ENCODE measurements at regions of chr11 and their contacts with region 1.

Region 1: DNA sequence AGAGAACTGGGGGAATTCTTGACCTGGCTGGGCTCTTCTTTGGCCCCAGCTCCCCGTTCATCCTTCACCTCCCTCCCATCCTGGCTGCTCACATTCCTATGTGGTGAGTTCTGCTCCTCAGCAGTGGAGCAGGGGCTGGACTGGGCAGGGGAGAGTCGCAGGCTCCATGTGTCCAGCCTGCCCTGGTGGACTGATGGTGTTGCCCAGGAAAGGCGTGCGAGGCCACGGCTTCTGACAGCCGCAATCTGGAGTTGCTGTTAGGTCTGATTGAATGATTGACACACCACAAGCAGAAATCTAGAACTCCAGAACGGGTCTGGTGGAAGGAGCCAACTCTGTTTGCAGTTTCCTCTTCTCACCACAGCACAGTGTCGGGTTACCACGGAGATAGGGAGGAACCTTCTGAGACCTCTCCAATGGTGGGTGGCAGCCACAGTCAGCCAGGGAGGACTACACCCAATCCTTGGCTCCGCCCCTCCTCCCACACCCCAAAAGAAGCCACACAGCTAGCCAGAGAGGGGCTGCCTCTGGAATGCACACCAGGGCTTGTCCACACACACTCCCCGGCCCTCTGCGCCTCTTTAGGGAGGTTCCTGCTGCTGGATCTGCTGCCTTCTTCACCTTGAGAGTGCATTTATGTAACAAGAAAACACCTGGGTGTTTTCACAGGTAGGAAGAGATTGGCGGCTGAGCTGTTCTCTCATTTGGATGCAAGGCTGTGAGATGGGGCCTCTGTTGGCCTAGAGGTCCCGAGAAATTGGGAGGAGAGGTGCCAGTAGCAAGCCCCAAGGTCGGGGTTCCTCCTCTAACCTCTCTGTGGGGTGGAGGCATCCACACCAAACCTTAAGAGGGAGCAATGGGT is 56.4 kb upstream of the CD44 start:
- DNase-seq: peak; percentile 86
- H3K4me3 Mint-ChIP-seq: peak overlapping the region; percentile 24
- H3K27ac Mint-ChIP-seq: peak overlapping the region; percentile 73
- H3K4me1 Mint-ChIP-seq: peaks cover 39% of the 10 kb centered on the region
- H3K27me3 Mint-ChIP-seq: no peaks in the 10 kb centered on the region
- CTCF ChIP-seq: no peak

Region 2: GRCh38 chr11:34916015-34916842 is 166.3 kb before region 1 on chr11 and contains the starts of genes APIP and PDHX:
- CTCF ChIA-PET with region 1: no interaction called
- POLR2A ChIA-PET with region 1: no interaction called
- intact Hi-C with region 1: no loop called
- DNase-seq: peak; percentile 99
- H3K4me3 Mint-ChIP-seq: peak within 1 kb of the TSS; percentile 99
- H3K27ac Mint-ChIP-seq: peak within 1 kb of the TSS; percentile 99
- H3K4me1 Mint-ChIP-seq: peaks cover 19% of the 10 kb centered on the region
- H3K27me3 Mint-ChIP-seq: no peaks in the 10 kb centered on the region
- CTCF ChIP-seq: no peak
- total RNA-seq, gene APIP: 32.4 and 36.9 TPM in 2 replicates
- total RNA-seq, gene PDHX: 35.5 and 35.9 TPM in 2 replicates

Region 3: DNA sequence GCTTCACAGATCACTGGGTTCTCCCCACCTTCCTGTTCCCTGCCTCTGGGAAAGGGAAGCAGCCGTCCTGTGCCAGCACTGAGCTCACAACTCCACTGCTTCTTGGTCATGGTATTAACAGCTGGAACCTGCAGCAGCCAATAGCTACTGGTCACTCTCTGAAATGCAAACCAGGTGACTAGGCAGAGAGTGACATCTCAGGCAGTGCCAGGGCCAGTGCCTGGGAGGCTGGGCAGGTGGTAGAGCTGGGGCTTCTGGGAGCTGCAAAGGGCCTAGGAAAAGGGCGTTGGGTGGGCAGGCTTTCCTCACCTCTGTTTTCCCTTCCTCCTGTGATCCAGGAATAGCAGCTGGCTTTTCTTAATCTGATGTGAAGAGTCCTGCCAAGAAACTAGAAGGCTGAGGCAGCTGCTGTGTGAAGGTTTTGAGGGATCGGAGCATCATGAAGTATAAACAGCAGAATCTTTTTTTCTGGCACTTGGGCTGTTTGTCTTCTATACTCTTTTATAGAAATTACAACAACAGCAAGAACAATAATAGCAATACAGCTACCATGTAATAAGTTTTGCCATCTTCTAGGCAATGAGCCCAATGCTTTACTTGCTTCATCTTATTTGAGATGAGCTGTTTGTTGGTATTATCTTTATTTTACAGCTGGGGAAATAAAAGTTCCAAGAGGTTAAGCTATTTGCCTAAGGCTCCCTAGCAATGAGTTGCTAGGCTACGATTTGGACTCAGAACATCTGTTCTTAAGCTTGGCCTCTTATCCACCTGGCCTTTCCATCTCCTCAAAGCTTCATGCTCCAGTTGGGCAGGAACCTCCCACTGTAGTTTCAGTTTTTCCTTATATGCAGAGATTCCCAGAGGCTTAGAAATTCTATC is 34.4 kb after region 1 on chr11:
- CTCF ChIA-PET with region 1: no interaction called
- POLR2A ChIA-PET with region 1: interaction called, 20 read pairs
- intact Hi-C with region 1: no loop called
- DNase-seq: peak; percentile 9
- H3K4me3 Mint-ChIP-seq: no peak overlapping the region
- H3K27ac Mint-ChIP-seq: peak overlapping the region; percentile 31
- H3K4me1 Mint-ChIP-seq: peaks cover 23% of the 10 kb centered on the region
- H3K27me3 Mint-ChIP-seq: no peaks in the 10 kb centered on the region
- CTCF ChIP-seq: no peak